Ascending aorta (tissue), 2 donors: ENCODE measurements at regions of chr2 and their contacts with region 1.

Region 1: GRCh38 chr2:134137182-134137611 is 116.7 kb upstream of the MGAT5 start:
- DNase-seq: peak in 1 of 2 donors; percentile 76
- H3K4me3 ChIP-seq: peak overlapping the region; percentile 36 to 55
- H3K27ac ChIP-seq: peak overlapping the region; percentile 44 to 70
- H3K4me1 ChIP-seq: peaks cover 11 to 15% of the 10 kb centered on the region in 2 donors
- H3K27me3 ChIP-seq: no peaks in the 10 kb centered on the region
- CTCF ChIP-seq: no peak

Region 2: DNA sequence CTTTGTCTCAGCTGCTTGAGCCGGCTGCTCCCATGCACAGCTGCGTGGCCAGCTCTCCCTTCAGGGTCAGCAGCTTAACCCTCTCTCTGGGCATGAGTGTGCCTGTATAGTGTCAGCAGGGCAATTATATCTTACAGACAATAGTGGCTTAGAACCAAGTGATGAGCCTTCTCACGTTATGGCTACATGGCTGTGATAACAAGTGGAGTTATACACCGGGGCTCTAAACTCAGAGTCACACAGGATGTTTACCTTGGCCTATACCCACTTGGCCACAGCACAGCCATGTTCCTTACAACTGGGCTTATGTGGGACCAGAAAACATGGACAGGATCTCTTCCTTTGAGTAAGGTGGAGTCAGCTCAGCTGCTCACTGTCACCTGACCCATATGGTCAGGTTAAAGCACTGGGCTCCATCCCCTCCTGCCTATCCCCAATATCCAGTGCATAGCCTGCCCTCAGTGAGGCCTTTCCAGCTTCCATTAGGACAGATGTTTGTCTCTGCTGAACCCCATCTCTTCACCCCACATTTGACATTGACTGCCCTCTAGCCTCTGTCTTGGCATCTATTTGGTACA is 274.7 kb before region 1 on chr2:
- intact Hi-C with region 1: no loop called
- DNase-seq: no peak
- H3K4me3 ChIP-seq: no peak overlapping the region
- H3K27ac ChIP-seq: no peak overlapping the region
- H3K4me1 ChIP-seq: no peaks in the 10 kb centered on the region
- H3K27me3 ChIP-seq: no peaks in the 10 kb centered on the region
- CTCF ChIP-seq: no peak

Region 3: DNA sequence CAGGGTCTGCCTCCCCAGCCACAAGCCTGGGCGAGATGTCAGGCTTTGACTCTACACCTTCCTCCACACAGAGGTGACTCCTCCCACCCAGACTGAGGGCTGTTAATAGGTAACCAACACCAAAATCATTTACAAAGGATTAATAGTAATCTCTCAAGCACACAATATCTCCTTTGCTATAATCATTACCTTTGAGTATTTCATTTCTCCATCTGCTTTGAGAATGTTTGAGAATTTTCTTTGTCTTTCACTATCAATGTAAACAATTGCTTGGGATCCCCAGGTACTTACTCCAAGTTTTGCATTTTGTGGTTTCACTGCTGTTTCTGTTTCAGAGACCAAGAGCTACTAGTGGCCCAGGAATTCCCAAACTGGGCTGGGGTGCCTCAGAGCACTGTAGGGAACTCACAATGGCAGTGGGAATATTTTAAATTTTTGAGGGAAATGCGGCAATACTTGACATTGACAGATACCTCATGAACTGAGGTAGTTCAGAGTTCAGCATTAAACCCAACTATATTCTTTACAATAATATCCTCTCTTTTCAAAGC is 49.8 kb before region 1 on chr2:
- intact Hi-C with region 1: no loop called
- DNase-seq: no peak
- H3K4me3 ChIP-seq: no peak overlapping the region
- H3K27ac ChIP-seq: no peak overlapping the region
- H3K4me1 ChIP-seq: no peaks in the 10 kb centered on the region
- H3K27me3 ChIP-seq: no peaks in the 10 kb centered on the region
- CTCF ChIP-seq: no peak

Region 4: GRCh38 chr2:134189009-134189720 is 52.0 kb after region 1 on chr2:
- intact Hi-C with region 1: no loop called
- DNase-seq: no peak
- H3K4me3 ChIP-seq: no peak overlapping the region
- H3K27ac ChIP-seq: no peak overlapping the region
- H3K4me1 ChIP-seq: peaks cover 0 to 14% of the 10 kb centered on the region in 2 donors
- H3K27me3 ChIP-seq: no peaks in the 10 kb centered on the region
- CTCF ChIP-seq: no peak

Region 5: DNA sequence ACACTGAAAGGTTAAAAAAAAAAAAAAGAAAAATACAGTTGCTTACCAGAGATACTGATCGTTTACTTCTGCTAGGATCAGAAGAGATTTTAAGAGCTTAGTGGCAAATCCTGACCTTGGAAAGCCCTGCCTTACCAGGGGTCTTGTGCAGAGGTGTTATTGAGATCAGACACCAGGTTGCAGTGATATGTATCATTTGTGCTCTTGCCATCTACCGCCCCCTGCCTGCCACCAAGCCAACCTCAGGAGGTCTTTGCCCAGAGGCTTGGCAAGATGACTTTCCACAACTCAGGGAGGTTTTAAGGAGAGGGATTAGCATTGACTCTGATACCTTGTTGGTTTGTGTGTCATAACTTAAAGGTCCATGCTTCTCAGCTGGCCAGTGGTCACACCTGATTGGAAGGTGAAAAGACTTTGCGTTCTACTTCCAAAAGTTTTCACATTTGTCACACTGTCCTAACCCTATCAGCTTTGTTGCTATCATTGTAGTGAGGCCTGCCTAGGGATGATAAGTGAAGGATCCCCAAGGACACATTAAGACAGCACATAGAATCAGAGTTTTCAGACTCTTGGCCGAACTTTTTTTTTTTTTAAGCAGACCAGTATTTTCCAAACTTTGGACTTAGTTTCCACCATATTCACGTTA is 70.5 kb after region 1 on chr2:
- intact Hi-C with region 1: loop called (anchors 5 kb)
- DNase-seq: peak in 1 of 2 donors; percentile 68
- H3K4me3 ChIP-seq: no peak overlapping the region
- H3K27ac ChIP-seq: no peak overlapping the region
- H3K4me1 ChIP-seq: peaks cover 0 to 17% of the 10 kb centered on the region in 2 donors
- H3K27me3 ChIP-seq: no peaks in the 10 kb centered on the region
- CTCF ChIP-seq: peak; percentile 43 to 68 (median 63)

Region 6: DNA sequence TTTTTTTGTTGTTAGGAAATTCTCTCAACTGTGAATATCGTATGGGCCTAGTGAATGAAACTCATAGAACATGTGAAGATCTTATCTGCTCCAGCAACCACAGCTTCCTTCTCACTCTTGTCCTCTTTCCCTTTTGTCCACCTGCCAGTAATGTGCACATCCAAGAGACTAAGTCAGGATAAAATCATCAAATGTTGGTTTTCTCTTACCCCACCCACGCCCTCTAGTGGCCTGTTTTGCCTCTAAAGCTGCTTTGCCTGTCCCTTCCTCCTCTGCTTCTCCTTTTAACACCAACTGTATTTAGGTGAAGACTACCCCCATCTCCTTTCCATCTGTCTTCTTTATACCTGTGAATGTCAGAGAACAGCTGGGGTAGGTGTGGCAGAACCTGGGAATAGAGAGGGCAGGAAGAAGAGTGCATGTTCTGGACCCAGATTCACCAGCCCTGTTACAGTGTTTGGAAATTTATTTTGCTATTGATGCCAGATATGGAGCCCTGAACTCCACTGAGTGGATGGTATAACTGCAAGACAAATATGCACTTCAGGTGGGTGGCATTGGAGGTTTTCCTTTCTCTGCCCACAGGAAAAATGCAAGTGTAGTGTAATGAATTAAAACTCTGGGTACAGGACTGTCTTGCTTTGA is 108.3 kb after region 1 on chr2:
- intact Hi-C with region 1: loop called (anchors 5 kb)
- DNase-seq: peak in 1 of 2 donors; percentile 89
- H3K4me3 ChIP-seq: no peak overlapping the region
- H3K27ac ChIP-seq: no peak overlapping the region
- H3K4me1 ChIP-seq: peaks cover 0 to 3% of the 10 kb centered on the region in 2 donors
- H3K27me3 ChIP-seq: no peaks in the 10 kb centered on the region
- CTCF ChIP-seq: peak; percentile 36 to 67 (median 65)